K562 (cell line): ENCODE measurements at regions of chr11 and their contacts with region 1.

Region 1: DNA sequence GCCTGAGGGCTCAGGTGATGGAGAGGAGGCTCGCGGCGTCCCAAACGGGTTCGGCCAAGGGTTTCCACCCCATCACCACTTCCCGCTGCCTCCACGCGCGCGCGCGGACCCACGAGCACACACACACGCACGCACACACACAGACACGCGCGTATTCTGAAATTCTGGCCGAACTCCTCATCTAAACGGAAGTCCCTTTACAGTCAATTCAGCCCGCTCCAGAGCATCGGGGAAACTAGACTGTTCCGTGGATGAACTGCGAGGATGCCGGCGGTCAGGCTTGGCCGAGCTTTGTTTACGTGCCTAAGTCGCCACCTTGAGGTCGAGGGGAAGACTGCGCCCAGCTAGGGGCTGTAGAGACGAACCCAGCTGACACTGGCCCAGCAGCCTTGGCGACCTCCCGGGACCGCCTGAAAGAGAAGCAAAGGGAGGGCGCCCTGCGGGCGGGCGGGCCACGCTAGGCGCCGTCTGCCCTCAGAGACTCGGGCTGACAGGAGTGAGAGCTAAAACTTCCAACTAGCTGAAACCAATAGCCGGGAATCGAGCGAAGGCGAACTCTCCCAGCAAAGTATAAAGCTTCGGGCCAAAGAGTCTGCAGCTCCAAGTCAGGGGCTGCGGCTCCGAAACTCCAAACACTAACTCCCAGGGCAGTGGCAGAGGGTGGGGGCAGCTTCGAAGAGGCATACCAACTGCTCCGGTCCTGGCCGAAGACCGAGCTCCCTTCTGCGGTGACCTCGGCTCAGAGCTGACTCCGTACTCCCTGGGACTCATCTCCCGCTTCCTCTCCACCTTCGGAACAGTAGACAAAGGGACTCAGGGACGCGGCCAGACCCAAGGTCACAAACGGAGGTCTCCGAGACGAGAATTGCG is 124.7 kb upstream of the C11orf58 start:
- DNase-seq: peak; percentile 77 to 90 (median 82)
- ATAC-seq: peak; percentile 100
- H3K4me3 ChIP-seq: peak overlapping the region; percentile 36
- H3K27ac ChIP-seq: no peak overlapping the region
- H3K4me1 ChIP-seq: peaks cover 4 to 18% of the 10 kb centered on the region in 2 experiments; a peak in 4 of 5 replicates
- H3K27me3 ChIP-seq: peaks cover 0 to 7% of the 10 kb centered on the region in 2 experiments; a peak in 2 of 5 replicates
- CTCF ChIP-seq: peak; percentile 87 to 93 (median 91)
- EP300 ChIP-seq: no peak
- POLR2A ChIP-seq: no peak
- RAD21 ChIP-seq: peak; percentile 82 to 89

Region 2: GRCh38 chr11:15764948-15765347 is 848.8 kb before region 1 on chr11:
- CTCF ChIA-PET with region 1: no interaction called
- POLR2A ChIA-PET with region 1: no interaction called
- in situ Hi-C with region 1: no loop called
- intact Hi-C with region 1: loop called (anchors 5 kb)
- DNase-seq: no peak
- ATAC-seq: no peak
- H3K4me3 ChIP-seq: no peak overlapping the region
- H3K27ac ChIP-seq: no peak overlapping the region
- H3K4me1 ChIP-seq: no peaks in the 10 kb centered on the region
- H3K27me3 ChIP-seq: no peaks in the 10 kb centered on the region
- CTCF ChIP-seq: no peak
- EP300 ChIP-seq: no peak
- POLR2A ChIP-seq: no peak
- RAD21 ChIP-seq: no peak

Region 3: GRCh38 chr11:15770798-15771414 is 842.8 kb before region 1 on chr11:
- CTCF ChIA-PET with region 1: interaction called, 4 read pairs
- POLR2A ChIA-PET with region 1: no interaction called
- in situ Hi-C with region 1: no loop called
- intact Hi-C with region 1: loop called (anchors 5 kb)
- DNase-seq: peak; percentile 39 to 61 (median 50)
- ATAC-seq: peak; percentile 87
- H3K4me3 ChIP-seq: no peak overlapping the region
- H3K27ac ChIP-seq: no peak overlapping the region
- H3K4me1 ChIP-seq: no peaks in the 10 kb centered on the region
- H3K27me3 ChIP-seq: peaks cover 0 to 13% of the 10 kb centered on the region in 2 experiments; a peak in 1 of 5 replicates
- CTCF ChIP-seq: peak; percentile 66 to 76 (median 69)
- EP300 ChIP-seq: no peak
- POLR2A ChIP-seq: no peak
- RAD21 ChIP-seq: peak; percentile 36 to 50; a peak in 3 of 4 replicates

Region 4: GRCh38 chr11:15852179-15852578 is 761.6 kb before region 1 on chr11:
- CTCF ChIA-PET with region 1: interaction called, 3 read pairs
- POLR2A ChIA-PET with region 1: no interaction called
- in situ Hi-C with region 1: loop called (anchors 25 kb)
- intact Hi-C with region 1: loop called (anchors 10 kb)
- DNase-seq: peak; percentile 14 to 50 (median 24)
- ATAC-seq: peak; percentile 53; the same call in 1 of the 3 replicates
- H3K4me3 ChIP-seq: no peak overlapping the region
- H3K27ac ChIP-seq: no peak overlapping the region
- H3K4me1 ChIP-seq: no peaks in the 10 kb centered on the region
- H3K27me3 ChIP-seq: peaks cover 0 to 10% of the 10 kb centered on the region in 2 experiments; a peak in 4 of 5 replicates
- CTCF ChIP-seq: peak; percentile 49 to 71 (median 64)
- EP300 ChIP-seq: no peak
- POLR2A ChIP-seq: no peak
- RAD21 ChIP-seq: peak; percentile 79 to 80

Region 5: GRCh38 chr11:15941201-15941770 is 672.5 kb before region 1 on chr11:
- CTCF ChIA-PET with region 1: interaction called, 14 read pairs
- POLR2A ChIA-PET with region 1: no interaction called
- in situ Hi-C with region 1: no loop called
- intact Hi-C with region 1: loop called (anchors 5 kb)
- DNase-seq: peak; percentile 76 to 96 (median 92)
- ATAC-seq: peak; percentile 97
- H3K4me3 ChIP-seq: no peak overlapping the region
- H3K27ac ChIP-seq: no peak overlapping the region
- H3K4me1 ChIP-seq: peaks cover 0 to 14% of the 10 kb centered on the region in 2 experiments; a peak in 3 of 5 replicates
- H3K27me3 ChIP-seq: peaks cover 0 to 13% of the 10 kb centered on the region in 2 experiments; a peak in 3 of 5 replicates
- CTCF ChIP-seq: peak; percentile 88 to 97 (median 93)
- EP300 ChIP-seq: no peak
- POLR2A ChIP-seq: no peak
- RAD21 ChIP-seq: peak; percentile 89 to 91

Region 6: GRCh38 chr11:16191212-16191867 is 422.4 kb before region 1 on chr11:
- CTCF ChIA-PET with region 1: interaction called, 8 read pairs
- POLR2A ChIA-PET with region 1: interaction called, 4 read pairs
- in situ Hi-C with region 1: loop called (anchors 5 kb)
- intact Hi-C with region 1: loop called (anchors 1 kb)
- DNase-seq: peak in 2 of 4 experiments; percentile 35 to 54
- ATAC-seq: peak; percentile 75
- H3K4me3 ChIP-seq: no peak overlapping the region
- H3K27ac ChIP-seq: no peak overlapping the region
- H3K4me1 ChIP-seq: peaks cover 3 to 15% of the 10 kb centered on the region in 2 experiments; a peak in 4 of 5 replicates
- H3K27me3 ChIP-seq: no peaks in the 10 kb centered on the region
- CTCF ChIP-seq: peak in 2 of 3 experiments; percentile 53 to 67; a peak in 3 of 6 replicates
- EP300 ChIP-seq: no peak
- POLR2A ChIP-seq: no peak
- RAD21 ChIP-seq: peak; percentile 75 to 80

Region 7: DNA sequence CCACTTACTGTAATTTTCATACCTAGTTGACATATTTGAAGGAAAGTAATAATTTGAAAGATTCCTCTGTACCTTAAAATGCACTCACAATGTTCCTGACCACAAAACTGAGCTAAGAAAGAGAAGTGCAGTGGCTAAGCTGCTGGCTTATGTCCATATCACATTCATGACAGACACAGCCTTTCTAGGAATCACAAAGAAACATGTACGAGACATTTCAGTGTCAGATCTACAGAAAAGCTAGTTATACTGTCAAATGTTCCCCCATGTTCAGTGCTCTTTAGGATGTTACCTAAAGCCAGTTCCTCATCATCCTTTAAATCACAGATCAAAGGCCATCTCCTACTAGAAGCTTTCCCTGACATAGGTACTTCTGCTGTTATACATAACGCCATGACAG is 17.5 kb before region 1 on chr11:
- CTCF ChIA-PET with region 1: no interaction called
- POLR2A ChIA-PET with region 1: no interaction called
- in situ Hi-C with region 1: no loop called
- intact Hi-C with region 1: no loop called
- DNase-seq: peak in 2 of 4 experiments; percentile 39 to 70
- ATAC-seq: peak; percentile 88
- H3K4me3 ChIP-seq: no peak overlapping the region
- H3K27ac ChIP-seq: peak overlapping the region; percentile 65
- H3K4me1 ChIP-seq: peaks cover 2 to 4% of the 10 kb centered on the region in 2 experiments; a peak in 3 of 5 replicates
- H3K27me3 ChIP-seq: no peaks in the 10 kb centered on the region
- CTCF ChIP-seq: no peak
- EP300 ChIP-seq: 0 out of 2 replicates have a peak, but pooled peaks have one; percentile 1
- POLR2A ChIP-seq: no peak
- RAD21 ChIP-seq: no peak

Region 8: GRCh38 chr11:16791191-16791961 is 177.6 kb after region 1 on chr11:
- CTCF ChIA-PET with region 1: no interaction called
- POLR2A ChIA-PET with region 1: no interaction called
- in situ Hi-C with region 1: no loop called
- intact Hi-C with region 1: no loop called
- DNase-seq: no peak
- ATAC-seq: peak; percentile 37
- H3K4me3 ChIP-seq: no peak overlapping the region
- H3K27ac ChIP-seq: no peak overlapping the region
- H3K4me1 ChIP-seq: no peaks in the 10 kb centered on the region; a peak in 1 of 5 replicates
- H3K27me3 ChIP-seq: peaks cover 8 to 51% of the 10 kb centered on the region in 2 experiments; a peak in 4 of 5 replicates
- CTCF ChIP-seq: no peak
- EP300 ChIP-seq: no peak
- POLR2A ChIP-seq: no peak
- RAD21 ChIP-seq: no peak